ENCODE measurements at regions of chrX and their contacts with region 1.

Region 1: GRCh38 chrX:71181910-71182799 is 37.5 kb downstream of the NLGN3 start:
- DNase-seq: peak; percentile 55 to 94 (median 72)
- ATAC-seq: peak; percentile 94
- H3K4me3 ChIP-seq: peak overlapping the region; percentile 68
- H3K4me3 Mint-ChIP-seq: peak overlapping the region; percentile 98
- H3K27ac ChIP-seq: peak overlapping the region; percentile 89 to 92
- H3K27ac Mint-ChIP-seq: peak overlapping the region; percentile 98
- H3K4me1 ChIP-seq: peaks cover 20% of the 10 kb centered on the region
- H3K4me1 Mint-ChIP-seq: peaks cover 25% of the 10 kb centered on the region
- H3K27me3 ChIP-seq: no peaks in the 10 kb centered on the region
- H3K27me3 Mint-ChIP-seq: no peaks in the 10 kb centered on the region
- CTCF ChIP-seq: no peak

Region 2: DNA sequence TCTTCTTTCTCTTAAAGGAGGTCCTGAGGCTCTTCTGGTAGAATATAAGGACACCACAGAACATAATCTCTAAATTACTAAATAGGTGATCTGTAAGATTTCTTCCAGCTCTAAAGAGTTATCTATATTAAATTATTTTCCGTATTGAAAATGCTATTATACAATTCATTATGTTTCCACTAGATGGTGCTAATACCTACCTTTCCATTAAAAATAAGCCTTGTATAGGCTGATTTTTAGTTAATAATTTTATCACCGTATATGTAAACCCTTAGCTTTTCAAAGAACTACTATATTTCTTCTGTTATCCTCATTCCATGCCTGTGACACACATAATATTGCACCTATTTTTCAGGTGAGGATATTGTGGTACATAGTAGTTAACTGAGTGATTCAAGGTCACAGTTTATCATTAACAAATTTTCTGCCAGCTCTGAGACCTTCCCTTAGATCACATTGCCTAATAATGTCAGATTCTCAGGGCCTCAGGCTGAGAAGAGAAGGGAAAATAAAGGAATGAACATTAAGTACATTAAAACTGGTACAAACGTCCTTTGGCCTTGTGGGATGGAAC is 412.4 kb before region 1 on chrX:
- CTCF ChIA-PET with region 1: no interaction called
- POLR2A ChIA-PET with region 1: interaction called, 3 read pairs
- intact Hi-C with region 1: loop called in 1 of 2 experiments (anchors 2 kb)
- DNase-seq: peak in 2 of 14 experiments; percentile 2 to 11
- ATAC-seq: no peak
- H3K4me3 ChIP-seq: no peak overlapping the region
- H3K4me3 Mint-ChIP-seq: no peak overlapping the region
- H3K27ac ChIP-seq: no peak overlapping the region
- H3K27ac Mint-ChIP-seq: no peak overlapping the region
- H3K4me1 ChIP-seq: no peaks in the 10 kb centered on the region
- H3K4me1 Mint-ChIP-seq: no peaks in the 10 kb centered on the region
- H3K27me3 ChIP-seq: no peaks in the 10 kb centered on the region
- H3K27me3 Mint-ChIP-seq: no peaks in the 10 kb centered on the region
- CTCF ChIP-seq: peak; percentile 49

Region 3: DNA sequence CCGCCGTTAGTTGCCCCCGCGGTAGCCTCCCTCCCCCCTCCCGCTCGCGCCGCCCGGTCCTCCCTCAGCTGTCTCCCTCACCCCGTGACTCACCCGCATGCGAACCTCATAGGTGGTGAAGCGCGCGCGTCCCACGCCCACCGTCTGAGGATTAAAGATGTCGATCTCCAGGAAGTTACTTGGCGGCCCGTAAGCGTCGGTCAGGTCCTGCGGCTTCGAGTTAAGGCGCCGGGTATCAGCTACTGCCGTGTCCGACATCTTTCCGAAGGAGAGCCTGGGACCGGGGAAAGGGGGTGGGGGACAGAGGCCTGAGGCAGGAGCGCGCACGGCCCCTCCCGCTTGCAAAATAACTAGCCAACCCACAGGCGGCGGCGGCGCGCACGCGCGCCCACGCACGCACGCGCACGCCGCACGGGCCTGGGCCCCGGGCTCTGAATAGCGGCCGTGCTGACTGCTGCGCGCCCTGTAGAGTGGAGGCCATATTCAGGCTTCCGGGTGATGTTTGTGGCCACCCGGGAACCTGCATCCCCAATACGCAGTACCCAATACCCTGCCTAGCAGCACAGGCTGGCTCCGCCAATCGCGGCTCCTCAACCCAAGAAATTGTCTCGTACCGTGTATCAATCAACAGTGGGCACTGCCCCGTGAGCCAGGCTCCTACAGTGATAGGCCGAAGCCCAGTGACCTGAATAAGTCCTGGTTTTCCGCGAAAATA is 113.9 kb before region 1 on chrX and contains the start of gene SNX12:
- CTCF ChIA-PET with region 1: no interaction called
- POLR2A ChIA-PET with region 1: interaction called, 10 read pairs
- intact Hi-C with region 1: loop called in 1 of 2 experiments (anchors 5 kb)
- DNase-seq: peak; percentile 73 to 95 (median 84)
- ATAC-seq: peak; percentile 91
- H3K4me3 ChIP-seq: peak within 1 kb of the TSS; percentile 73
- H3K4me3 Mint-ChIP-seq: peak within 1 kb of the TSS; percentile 98
- H3K27ac ChIP-seq: peak within 1 kb of the TSS; percentile 77 to 89
- H3K27ac Mint-ChIP-seq: peak within 1 kb of the TSS; percentile 100
- H3K4me1 ChIP-seq: peaks cover 10% of the 10 kb centered on the region
- H3K4me1 Mint-ChIP-seq: peaks cover 28% of the 10 kb centered on the region
- H3K27me3 ChIP-seq: no peaks in the 10 kb centered on the region
- H3K27me3 Mint-ChIP-seq: no peaks in the 10 kb centered on the region
- CTCF ChIP-seq: no peak
- total RNA-seq, gene SNX12: 20.5 to 22.4 TPM

Region 4: DNA sequence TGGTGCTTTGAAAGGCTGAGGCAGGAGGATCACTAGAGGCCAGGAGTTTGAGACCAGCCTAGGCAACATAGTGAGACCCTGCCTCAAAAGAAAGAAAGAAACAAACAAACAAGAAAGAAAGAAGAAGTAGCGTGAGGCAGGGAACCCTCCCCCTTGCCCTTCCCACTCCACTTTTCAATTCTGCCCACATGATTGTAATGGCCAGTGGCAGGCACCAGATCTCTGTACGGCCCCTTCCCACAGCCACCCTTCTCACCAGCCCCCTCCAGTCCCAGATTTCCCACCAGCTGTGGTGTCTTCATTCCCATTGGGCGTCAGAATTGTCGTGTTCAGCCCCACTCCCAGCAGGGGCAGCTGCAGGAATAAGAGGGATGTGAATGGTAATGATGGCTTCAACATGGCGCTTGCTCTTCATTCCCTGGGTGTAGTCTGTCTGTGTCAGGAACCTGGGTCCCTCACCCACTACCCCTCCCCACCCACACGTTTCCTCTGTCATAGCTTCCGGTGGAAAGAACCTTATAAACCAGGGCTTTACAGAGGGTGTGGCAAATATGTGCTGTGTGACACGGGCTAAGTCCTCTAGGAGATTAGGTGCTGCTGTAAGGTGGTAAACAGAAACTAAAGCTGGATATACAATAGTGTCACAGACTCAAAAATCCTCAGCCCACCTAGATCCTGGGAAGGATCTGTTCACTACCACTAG is 70.9 kb before region 1 on chrX and contains the start of gene IL2RG:
- CTCF ChIA-PET with region 1: no interaction called
- POLR2A ChIA-PET with region 1: interaction called, 13 read pairs
- intact Hi-C with region 1: no loop called
- DNase-seq: peak; percentile 56 to 94 (median 70)
- ATAC-seq: peak; percentile 81
- H3K4me3 ChIP-seq: peak within 1 kb of the TSS; percentile 93
- H3K4me3 Mint-ChIP-seq: peak within 1 kb of the TSS; percentile 98
- H3K27ac ChIP-seq: peak within 1 kb of the TSS; percentile 96 to 99
- H3K27ac Mint-ChIP-seq: peak within 1 kb of the TSS; percentile 99
- H3K4me1 ChIP-seq: peaks cover 56% of the 10 kb centered on the region
- H3K4me1 Mint-ChIP-seq: peaks cover 51% of the 10 kb centered on the region
- H3K27me3 ChIP-seq: no peaks in the 10 kb centered on the region
- H3K27me3 Mint-ChIP-seq: no peaks in the 10 kb centered on the region
- CTCF ChIP-seq: no peak
- total RNA-seq, gene IL2RG: 213 to 225 TPM

Region 5: DNA sequence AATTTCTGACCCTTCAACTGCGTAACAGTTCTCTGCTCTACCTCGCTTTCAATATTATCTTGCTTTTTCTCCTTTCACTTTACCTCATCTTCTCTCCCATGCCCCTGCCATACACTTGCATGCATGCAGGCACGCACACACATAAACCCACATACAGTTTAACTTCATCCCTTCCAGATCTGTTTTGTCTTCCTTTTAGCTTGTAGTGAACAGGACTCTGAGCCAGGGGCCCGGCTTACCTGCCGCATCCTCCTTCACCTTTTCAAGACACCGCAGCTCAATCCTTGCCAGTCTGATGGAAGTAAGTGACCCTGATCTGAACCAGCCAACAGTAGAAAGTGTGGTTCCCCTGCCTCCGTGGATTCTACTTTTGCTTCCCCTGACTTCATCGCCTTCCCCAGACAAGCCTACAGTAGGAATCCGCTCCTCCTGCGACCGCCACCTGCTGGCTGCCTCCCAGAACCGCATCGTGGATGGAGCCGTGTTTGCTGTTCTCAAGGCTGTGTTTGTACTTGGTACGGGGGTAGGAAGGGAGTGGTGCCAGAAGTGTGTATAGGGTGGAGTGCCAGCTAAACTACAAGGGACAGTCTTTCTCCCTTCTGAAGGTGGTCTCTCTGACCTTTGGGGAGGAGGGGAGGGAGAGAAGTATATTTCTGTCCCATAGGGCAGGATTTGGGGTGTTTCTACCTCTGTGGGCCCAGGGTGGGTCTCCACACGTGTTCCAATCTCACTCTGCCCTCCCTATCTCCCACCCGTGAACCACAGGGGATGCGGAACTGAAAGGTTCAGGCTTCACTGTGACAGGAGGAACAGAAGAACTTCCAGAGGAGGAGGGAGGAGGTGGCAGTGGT is 53.0 kb before region 1 on chrX:
- CTCF ChIA-PET with region 1: no interaction called
- POLR2A ChIA-PET with region 1: no interaction called
- intact Hi-C with region 1: loop called in 1 of 2 experiments (anchors 5 kb)
- DNase-seq: peak; percentile 59 to 87 (median 74)
- ATAC-seq: peak; percentile 96
- H3K4me3 ChIP-seq: no peak overlapping the region
- H3K4me3 Mint-ChIP-seq: no peak overlapping the region
- H3K27ac ChIP-seq: no peak overlapping the region
- H3K27ac Mint-ChIP-seq: peak overlapping the region; percentile 38
- H3K4me1 ChIP-seq: peaks cover 17% of the 10 kb centered on the region
- H3K4me1 Mint-ChIP-seq: peaks cover 18% of the 10 kb centered on the region
- H3K27me3 ChIP-seq: no peaks in the 10 kb centered on the region
- H3K27me3 Mint-ChIP-seq: no peaks in the 10 kb centered on the region
- CTCF ChIP-seq: peak; percentile 60

Region 6: DNA sequence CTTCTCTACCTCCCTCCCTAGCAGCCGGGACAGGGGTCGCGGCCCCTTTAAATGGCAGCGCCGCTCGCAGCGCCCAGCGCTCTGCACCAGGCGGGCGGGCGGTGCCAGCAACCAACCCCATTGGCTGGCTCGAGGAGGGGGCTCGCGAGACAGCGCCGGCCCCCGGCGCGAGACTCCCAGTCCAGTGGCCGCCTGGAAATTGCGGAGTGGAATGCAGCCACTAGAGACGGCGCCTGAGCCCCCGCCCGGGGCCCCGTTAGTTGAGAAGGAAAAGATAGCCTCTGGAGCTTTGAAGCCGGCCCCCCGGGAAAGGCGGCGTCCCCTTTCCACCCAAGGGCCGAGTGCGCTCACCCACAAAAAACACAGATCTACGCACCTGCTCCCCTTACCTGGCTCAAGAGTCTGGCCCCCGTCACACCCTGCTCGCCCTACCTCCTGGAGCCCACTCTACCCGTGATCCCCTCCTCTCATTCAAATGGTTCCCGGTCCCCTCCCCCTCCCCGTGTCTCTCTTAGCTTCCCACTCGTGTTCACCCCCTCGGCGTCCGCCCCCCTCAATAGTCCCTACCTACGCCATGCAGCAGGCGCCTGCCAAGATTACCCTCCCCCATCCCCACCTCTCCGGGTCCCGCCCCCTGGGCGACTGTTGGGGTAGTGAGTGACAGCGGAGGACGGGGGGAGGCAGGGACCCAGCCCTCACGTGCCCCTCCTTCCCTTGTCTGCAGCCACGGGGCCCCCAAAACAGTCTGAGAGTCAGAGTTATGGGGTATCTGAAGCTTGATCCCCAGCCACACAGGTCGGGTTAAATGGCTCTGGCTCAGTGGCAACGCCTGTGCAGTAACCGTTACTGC is 72.2 kb after region 1 on chrX and contains the start of gene ZMYM3:
- CTCF ChIA-PET with region 1: no interaction called
- POLR2A ChIA-PET with region 1: interaction called, 36 read pairs
- intact Hi-C with region 1: loop called in 1 of 2 experiments (anchors 1 kb)
- DNase-seq: peak; percentile 59 to 87 (median 75)
- ATAC-seq: peak; percentile 75
- H3K4me3 ChIP-seq: peak within 1 kb of the TSS; percentile 85
- H3K4me3 Mint-ChIP-seq: peak within 1 kb of the TSS; percentile 95
- H3K27ac ChIP-seq: peak within 1 kb of the TSS; percentile 72 to 84
- H3K27ac Mint-ChIP-seq: peak within 1 kb of the TSS; percentile 93
- H3K4me1 ChIP-seq: peaks cover 27% of the 10 kb centered on the region
- H3K4me1 Mint-ChIP-seq: peaks cover 29% of the 10 kb centered on the region
- H3K27me3 ChIP-seq: no peaks in the 10 kb centered on the region
- H3K27me3 Mint-ChIP-seq: no peaks in the 10 kb centered on the region
- CTCF ChIP-seq: no peak
- total RNA-seq, gene ZMYM3: 16.7 to 17.6 TPM

Region 7: DNA sequence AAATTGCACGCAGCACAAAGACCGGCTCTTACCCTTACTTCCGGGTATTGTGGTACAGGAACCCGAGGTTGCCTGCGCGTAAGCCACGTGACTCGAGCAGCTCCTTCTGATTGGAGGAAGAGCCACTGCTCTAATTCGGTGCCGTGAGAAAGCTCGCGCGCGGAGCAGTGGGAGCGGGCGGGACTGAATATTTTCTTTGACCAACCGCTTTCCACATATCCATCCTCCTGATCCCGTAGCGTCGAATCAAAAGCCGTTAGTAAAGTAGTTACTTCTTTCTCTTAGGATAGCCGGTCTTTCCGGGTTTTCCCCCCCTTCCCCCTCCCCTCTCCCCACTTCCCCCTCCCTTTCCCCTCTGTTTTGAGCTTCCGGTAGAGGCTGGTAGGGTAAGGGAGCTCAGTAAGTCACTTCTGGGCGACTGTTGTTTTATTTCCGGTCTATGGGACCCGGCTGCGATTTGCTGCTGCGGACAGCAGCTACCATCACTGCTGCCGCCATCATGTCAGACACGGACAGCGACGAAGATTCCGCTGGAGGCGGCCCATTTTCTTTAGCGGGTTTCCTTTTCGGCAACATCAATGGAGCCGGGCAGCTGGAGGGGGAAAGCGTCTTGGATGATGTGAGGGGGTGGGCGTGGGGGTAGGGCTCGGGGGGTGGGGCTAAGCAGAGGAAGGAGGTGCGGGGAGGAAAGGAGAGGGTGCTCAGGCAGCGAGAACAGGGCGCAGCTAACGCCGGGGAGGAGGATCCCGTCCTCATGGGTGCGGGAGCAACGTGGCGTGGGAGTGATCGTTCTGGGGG is 183.9 kb after region 1 on chrX and contains the start of gene TAF1:
- CTCF ChIA-PET with region 1: no interaction called
- POLR2A ChIA-PET with region 1: interaction called, 34 read pairs
- intact Hi-C with region 1: loop called in 1 of 2 experiments (anchors 5 kb)
- DNase-seq: peak; percentile 78 to 97 (median 87)
- ATAC-seq: peak; percentile 86
- H3K4me3 ChIP-seq: peak within 1 kb of the TSS; percentile 92
- H3K4me3 Mint-ChIP-seq: peak within 1 kb of the TSS; percentile 98
- H3K27ac ChIP-seq: peak within 1 kb of the TSS; percentile 85 to 90
- H3K27ac Mint-ChIP-seq: peak within 1 kb of the TSS; percentile 97
- H3K4me1 ChIP-seq: peaks cover 34% of the 10 kb centered on the region
- H3K4me1 Mint-ChIP-seq: peaks cover 28% of the 10 kb centered on the region
- H3K27me3 ChIP-seq: no peaks in the 10 kb centered on the region
- H3K27me3 Mint-ChIP-seq: no peaks in the 10 kb centered on the region
- CTCF ChIP-seq: no peak
- total RNA-seq, gene TAF1: 61.0 to 62.2 TPM

Region 8: DNA sequence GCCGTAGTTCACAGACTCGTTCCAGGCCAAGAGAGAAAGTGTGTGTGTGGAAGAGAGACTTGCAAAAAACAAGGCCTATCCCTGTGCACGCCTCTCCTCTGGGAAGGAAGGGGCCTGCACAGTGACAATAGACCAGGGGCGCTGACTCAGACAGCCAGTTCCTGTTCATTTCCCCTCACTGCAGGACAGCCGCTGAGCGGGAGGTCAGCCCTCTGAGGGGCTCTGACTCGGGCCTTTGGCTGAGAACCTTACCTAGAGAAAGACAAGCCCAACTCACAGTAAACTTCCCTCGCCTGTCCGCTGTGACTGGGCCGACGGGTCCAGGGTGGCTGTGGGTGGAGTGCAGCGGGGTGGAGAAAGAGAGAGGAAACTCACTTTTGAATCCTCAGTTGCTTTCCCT is 897.5 kb after region 1 on chrX:
- CTCF ChIA-PET with region 1: no interaction called
- POLR2A ChIA-PET with region 1: no interaction called
- intact Hi-C with region 1: no loop called
- DNase-seq: no peak
- ATAC-seq: no peak
- H3K4me3 ChIP-seq: no peak overlapping the region
- H3K4me3 Mint-ChIP-seq: no peak overlapping the region
- H3K27ac ChIP-seq: no peak overlapping the region
- H3K27ac Mint-ChIP-seq: no peak overlapping the region
- H3K4me1 ChIP-seq: peaks cover 18% of the 10 kb centered on the region
- H3K4me1 Mint-ChIP-seq: peaks cover 9% of the 10 kb centered on the region
- H3K27me3 ChIP-seq: no peaks in the 10 kb centered on the region
- H3K27me3 Mint-ChIP-seq: no peaks in the 10 kb centered on the region
- CTCF ChIP-seq: no peak

Measured in CD4-positive, alpha-beta T cell (primary cell).